OCI-LY7 (cell line): ENCODE measurements at regions of chr3 and their contacts with region 1.

Region 1: DNA sequence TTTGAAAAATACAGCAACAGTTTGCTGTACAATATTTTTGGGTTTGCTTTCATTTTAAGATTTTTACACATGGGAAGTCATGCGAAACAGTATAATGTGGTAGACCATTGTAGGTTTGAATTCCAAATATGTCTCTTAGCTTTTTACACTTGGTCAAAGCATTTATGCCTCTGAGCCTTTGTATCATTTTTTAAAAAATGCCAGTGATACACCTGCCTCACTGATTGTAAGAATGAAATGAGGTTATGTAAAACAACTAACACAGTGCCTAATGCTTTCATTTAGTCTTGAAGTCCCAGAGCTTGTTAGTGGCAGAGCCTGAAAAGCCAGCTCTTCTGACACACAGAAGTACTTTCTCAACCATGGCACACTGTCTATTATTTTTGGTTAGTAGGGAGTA is 202.0 kb downstream of the UBE2E2 start:
- DNase-seq: peak; percentile 77
- H3K4me3 ChIP-seq: peak overlapping the region; percentile 56
- H3K27ac ChIP-seq: peak overlapping the region; percentile 91
- H3K4me1 ChIP-seq: peaks cover 91% of the 10 kb centered on the region
- CTCF ChIP-seq: no peak

Region 2: DNA sequence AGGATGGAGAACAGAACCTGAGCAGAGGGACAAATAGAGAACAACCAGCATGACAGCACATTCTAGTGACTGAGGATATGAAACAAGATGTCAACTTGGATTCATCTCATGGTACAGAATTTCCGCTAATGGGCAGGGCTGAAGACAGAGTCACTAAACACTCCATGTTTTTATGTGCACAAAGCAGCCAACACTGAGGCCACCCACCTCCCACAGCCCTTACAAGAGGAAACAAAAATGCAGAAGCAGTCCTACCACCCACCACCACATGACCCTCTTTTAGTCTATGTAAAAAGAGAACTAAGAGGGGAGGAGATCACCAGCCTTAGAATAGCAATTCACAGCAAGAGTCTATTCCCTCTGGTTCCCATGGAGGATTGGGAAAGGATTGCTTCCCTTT is 333.3 kb before region 1 on chr3:
- CTCF ChIA-PET with region 1: no interaction called
- POLR2A ChIA-PET with region 1: no interaction called
- intact Hi-C with region 1: no loop called
- DNase-seq: peak; percentile 60
- H3K4me3 ChIP-seq: peak overlapping the region; percentile 12
- H3K27ac ChIP-seq: peak overlapping the region; percentile 69
- H3K4me1 ChIP-seq: peaks cover 55% of the 10 kb centered on the region
- CTCF ChIP-seq: no peak

Region 3: DNA sequence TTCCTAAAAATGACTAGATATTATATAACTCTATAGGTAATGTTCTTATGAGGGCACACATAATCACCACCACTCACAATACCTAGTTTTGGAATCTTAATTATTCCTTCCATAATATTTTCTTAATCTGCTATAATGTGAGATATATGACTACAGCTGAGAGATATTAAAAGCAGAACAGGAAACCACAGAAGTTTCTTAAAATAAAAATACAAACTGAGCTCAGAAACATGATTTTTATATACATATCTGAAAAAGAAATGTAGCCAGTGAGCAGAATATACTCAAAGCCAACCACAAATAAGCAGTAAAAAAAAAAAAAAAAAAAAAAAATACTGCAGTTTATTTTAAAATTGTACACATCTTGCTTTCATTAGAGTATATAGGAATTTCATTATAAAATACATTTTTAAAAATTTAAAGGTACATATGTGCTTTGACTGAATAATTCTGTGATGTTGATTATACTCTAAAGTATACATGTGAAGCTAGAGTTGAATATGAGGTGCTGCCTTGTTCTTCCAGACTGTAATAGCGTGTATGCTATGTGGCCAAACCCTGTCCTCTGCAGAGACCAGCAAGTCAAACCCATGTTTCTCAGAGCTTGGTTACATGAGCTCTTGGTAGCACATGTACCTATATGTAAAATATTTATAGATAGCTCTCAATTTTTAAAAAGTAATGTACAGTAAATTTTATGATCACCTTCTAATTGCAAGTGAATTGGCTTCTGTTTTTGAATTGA is 27.0 kb before region 1 on chr3:
- CTCF ChIA-PET with region 1: interaction called, 3 read pairs
- POLR2A ChIA-PET with region 1: interaction called, 14 read pairs
- intact Hi-C with region 1: no loop called
- DNase-seq: peak; percentile 60
- H3K4me3 ChIP-seq: peak overlapping the region; percentile 46
- H3K27ac ChIP-seq: peak overlapping the region; percentile 79
- H3K4me1 ChIP-seq: peaks cover 72% of the 10 kb centered on the region
- CTCF ChIP-seq: no peak

Region 4: GRCh38 chr3:23421811-23422516 is 16.9 kb after region 1 on chr3:
- CTCF ChIA-PET with region 1: no interaction called
- POLR2A ChIA-PET with region 1: interaction called, 12 read pairs
- intact Hi-C with region 1: no loop called
- DNase-seq: no peak
- H3K4me3 ChIP-seq: no peak overlapping the region
- H3K27ac ChIP-seq: no peak overlapping the region
- H3K4me1 ChIP-seq: peaks cover 18% of the 10 kb centered on the region
- CTCF ChIP-seq: no peak

Region 5: DNA sequence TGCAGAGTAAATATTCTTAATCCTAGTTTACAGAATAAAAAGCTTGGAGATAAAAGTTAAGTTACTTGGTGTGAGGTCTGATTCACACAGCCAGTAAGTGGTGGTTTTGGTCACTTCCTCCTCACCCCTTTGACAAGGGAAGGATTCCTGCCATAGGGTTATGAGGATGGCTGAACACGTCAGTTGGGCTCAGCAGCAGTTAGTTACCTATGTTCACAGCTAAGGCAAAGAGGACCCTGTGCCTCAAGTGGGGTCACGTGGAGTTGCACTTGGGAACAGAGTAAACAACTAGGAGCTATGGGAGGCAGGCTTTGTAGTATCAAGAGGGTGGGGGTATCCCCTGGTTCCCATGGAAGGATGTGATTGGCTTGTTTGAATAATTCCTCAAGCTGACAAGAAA is 30.2 kb after region 1 on chr3:
- CTCF ChIA-PET with region 1: no interaction called
- POLR2A ChIA-PET with region 1: interaction called, 24 read pairs
- intact Hi-C with region 1: no loop called
- DNase-seq: peak; percentile 57
- H3K4me3 ChIP-seq: no peak overlapping the region
- H3K27ac ChIP-seq: peak overlapping the region; percentile 6
- H3K4me1 ChIP-seq: peaks cover 79% of the 10 kb centered on the region
- CTCF ChIP-seq: 0 out of 2 replicates have a peak, but pooled peaks have one; percentile 22

Region 6: DNA sequence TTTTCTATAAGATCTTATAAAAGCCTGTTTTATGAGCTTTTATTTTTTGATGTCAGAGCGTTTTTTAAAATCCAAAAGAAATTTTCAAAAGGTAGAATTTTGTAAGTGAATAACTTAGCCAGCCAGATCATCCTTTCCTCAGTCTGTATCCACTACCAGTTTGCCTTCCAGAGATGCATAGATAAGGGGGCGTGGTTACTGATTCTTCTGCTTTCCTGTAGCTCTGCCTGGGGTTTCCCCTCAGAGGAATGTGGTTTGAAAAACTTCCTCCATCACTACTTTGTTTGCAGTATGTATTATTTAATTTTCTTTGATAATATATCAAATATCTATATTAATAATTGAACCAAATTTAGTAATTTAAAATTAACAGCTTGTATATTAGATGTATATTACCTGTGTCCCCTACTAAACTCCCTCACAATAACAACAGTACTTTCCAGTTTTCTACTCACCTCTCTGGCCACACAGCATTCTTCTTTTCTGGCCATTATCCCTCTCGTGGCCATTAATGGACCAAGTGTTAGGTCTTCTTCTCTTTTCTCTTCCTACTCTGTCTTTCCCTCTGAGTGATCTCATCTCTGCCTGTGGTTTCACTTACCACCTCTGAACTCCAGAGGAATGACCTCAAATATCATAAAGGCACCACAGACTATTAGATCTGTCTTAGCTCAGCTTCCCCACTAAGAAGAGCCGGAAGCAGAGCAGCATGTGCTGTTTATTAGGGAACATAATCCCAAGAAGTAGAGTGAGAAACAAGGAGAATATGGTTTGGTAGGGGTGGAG is 37.7 kb after region 1 on chr3:
- CTCF ChIA-PET with region 1: no interaction called
- POLR2A ChIA-PET with region 1: interaction called, 18 read pairs
- intact Hi-C with region 1: no loop called
- DNase-seq: peak; percentile 57
- H3K4me3 ChIP-seq: no peak overlapping the region
- H3K27ac ChIP-seq: no peak overlapping the region
- H3K4me1 ChIP-seq: peaks cover 63% of the 10 kb centered on the region
- CTCF ChIP-seq: no peak

Region 7: GRCh38 chr3:23519314-23520208 is 114.5 kb after region 1 on chr3:
- CTCF ChIA-PET with region 1: no interaction called
- POLR2A ChIA-PET with region 1: interaction called, 7 read pairs
- intact Hi-C with region 1: loop called (anchors 5 kb)
- DNase-seq: peak; percentile 72
- H3K4me3 ChIP-seq: peak overlapping the region; percentile 8
- H3K27ac ChIP-seq: peak overlapping the region; percentile 47
- H3K4me1 ChIP-seq: peaks cover 63% of the 10 kb centered on the region
- CTCF ChIP-seq: no peak

Region 8: DNA sequence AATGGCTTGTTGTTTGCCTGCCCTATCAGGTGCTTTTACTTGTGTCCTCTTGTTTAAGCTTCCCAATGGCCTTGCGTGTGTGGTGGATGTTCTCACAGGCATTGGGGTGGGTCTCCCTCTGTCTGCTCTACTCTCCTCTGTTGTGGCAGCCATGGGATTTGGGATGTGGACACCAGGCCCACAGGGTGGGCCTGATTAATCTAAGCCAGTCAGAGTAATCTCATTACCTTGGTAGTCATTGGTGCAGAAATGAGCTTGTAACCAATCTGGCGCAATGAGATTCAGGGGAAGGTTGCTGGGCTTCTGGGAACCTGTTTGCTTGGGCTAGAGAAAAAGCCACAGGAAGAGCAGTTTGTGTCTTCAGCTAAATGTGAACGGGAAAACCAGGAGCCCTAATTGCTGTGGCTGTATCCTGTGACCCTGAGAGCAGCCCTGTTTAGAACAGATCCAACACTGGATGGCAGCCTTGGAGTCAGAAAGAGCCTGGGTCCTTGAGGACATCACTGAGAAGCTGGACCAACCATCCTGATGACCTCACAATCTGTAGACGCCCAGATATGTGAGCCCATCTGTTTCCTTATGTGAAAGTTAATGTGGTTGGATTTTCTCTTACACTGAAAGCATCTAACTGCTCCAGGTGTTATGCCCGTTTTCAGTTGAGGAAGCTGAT is 243.4 kb after region 1 on chr3:
- CTCF ChIA-PET with region 1: no interaction called
- POLR2A ChIA-PET with region 1: interaction called, 3 read pairs
- intact Hi-C with region 1: loop called (anchors 5 kb)
- DNase-seq: no peak
- H3K4me3 ChIP-seq: no peak overlapping the region
- H3K27ac ChIP-seq: peak overlapping the region; percentile 49
- H3K4me1 ChIP-seq: peaks cover 39% of the 10 kb centered on the region
- CTCF ChIP-seq: 0 out of 2 replicates have a peak, but pooled peaks have one; percentile 23